ENCODE measurements at regions of chr15 and their contacts with region 1.

Region 1: GRCh38 chr15:92683232-92683834 is 27.8 kb upstream of the FAM174B start:
- DNase-seq: peak; percentile 72 to 75
- H3K4me3 ChIP-seq: no peak overlapping the region
- H3K27ac ChIP-seq: peak overlapping the region in 2 of 5 donors; percentile 16 to 71
- H3K4me1 ChIP-seq: peaks cover 0 to 30% (median 11%) of the 10 kb centered on the region in 4 donors
- H3K27me3 ChIP-seq: no peaks in the 10 kb centered on the region
- CTCF ChIP-seq: peak in 5 of 7 experiments; percentile 50 to 84 (median 69)
- EP300 ChIP-seq: no peak
- POLR2A ChIP-seq: no peak

Region 2: DNA sequence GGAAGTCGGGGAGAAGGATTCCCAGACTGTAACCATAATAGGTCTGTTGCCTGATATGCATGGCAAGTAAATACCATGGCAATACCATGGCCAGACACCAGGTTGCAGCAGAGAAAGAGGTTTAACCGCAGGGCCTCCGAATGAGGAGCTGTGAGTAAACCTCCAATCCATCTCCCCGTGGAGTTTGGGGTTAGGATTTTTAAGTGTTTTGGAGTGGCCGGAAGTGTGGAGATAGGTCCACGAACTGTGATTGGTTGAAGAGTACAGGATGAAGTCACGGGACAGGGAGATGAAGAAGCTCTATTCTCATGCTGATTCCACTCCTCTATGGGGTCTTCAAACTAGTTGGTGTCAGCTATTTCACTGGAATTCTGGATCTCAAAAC is 161.7 kb before region 1 on chr15:
- intact Hi-C with region 1: loop called (anchors 10 kb)
- DNase-seq: peak; percentile 85 to 93
- H3K4me3 ChIP-seq: no peak overlapping the region
- H3K27ac ChIP-seq: no peak overlapping the region
- H3K4me1 ChIP-seq: peaks cover 0 to 9% (median 4%) of the 10 kb centered on the region in 4 donors
- H3K27me3 ChIP-seq: no peaks in the 10 kb centered on the region
- CTCF ChIP-seq: peak in 5 of 7 experiments; percentile 63 to 98 (median 80)
- EP300 ChIP-seq: no peak
- POLR2A ChIP-seq: no peak

Region 3: GRCh38 chr15:94596707-94597106 is 1913.4 kb after region 1 on chr15:
- intact Hi-C with region 1: no loop called
- DNase-seq: no peak
- H3K4me3 ChIP-seq: no peak overlapping the region
- H3K27ac ChIP-seq: no peak overlapping the region
- H3K4me1 ChIP-seq: no peaks in the 10 kb centered on the region
- H3K27me3 ChIP-seq: peaks cover 0 to 5% (median 0%) of the 10 kb centered on the region in 3 donors
- CTCF ChIP-seq: no peak
- EP300 ChIP-seq: no peak
- POLR2A ChIP-seq: no peak